Mammary epithelial cell (primary cell): ENCODE measurements at regions of chr1 and their contacts with region 1.

Region 1: DNA sequence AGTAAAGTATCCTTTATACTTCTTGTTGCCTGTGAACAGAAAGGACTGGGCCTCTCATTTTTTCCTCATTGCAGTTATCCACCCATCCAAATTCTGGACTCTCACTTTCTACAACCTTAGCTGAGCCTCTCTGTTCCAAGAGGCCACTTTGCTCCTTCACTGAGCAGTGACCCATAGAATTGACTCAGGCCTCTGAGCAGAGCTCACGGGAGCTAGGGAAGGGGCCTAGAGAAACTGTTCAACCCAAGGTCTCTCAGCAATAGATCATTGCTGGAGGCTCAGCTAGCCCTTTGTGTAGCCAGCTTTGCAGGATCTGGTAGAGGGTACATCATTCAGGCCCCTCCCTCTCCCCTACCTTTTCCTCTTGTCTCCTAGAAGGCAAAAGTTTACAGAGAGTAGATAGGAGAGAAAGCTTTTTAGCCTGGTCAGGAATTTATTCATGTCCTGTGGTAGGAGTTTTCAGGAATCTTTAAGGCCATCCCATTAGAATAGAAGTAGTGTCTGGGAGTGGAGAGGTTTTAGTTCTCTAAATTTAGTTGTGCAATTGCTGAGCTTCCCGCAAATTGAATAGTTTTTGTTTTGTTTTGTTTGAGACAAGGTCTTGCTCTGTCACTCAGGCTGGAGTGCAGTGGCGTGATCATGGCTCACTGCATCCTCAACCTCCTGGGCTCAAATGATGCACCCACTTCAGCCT is 6.7 kb downstream of the INTS3 start:
- DNase-seq: no peak
- H3K4me3 ChIP-seq: no peak overlapping the region
- H3K27ac ChIP-seq: no peak overlapping the region
- H3K4me1 ChIP-seq: peaks cover 5% of the 10 kb centered on the region
- H3K27me3 ChIP-seq: no peaks in the 10 kb centered on the region
- CTCF ChIP-seq: no peak

Region 2: GRCh38 chr1:153639280-153639679 is 95.3 kb before region 1 on chr1:
- CTCF ChIA-PET with region 1: no interaction called
- dilution Hi-C with region 1: loop called (anchors 5 kb)
- in situ Hi-C with region 1: no loop called
- intact Hi-C with region 1: no loop called
- DNase-seq: no peak
- H3K4me3 ChIP-seq: no peak overlapping the region
- H3K27ac ChIP-seq: no peak overlapping the region
- H3K4me1 ChIP-seq: peaks cover 3% of the 10 kb centered on the region
- H3K27me3 ChIP-seq: no peaks in the 10 kb centered on the region
- CTCF ChIP-seq: no peak

Region 3: DNA sequence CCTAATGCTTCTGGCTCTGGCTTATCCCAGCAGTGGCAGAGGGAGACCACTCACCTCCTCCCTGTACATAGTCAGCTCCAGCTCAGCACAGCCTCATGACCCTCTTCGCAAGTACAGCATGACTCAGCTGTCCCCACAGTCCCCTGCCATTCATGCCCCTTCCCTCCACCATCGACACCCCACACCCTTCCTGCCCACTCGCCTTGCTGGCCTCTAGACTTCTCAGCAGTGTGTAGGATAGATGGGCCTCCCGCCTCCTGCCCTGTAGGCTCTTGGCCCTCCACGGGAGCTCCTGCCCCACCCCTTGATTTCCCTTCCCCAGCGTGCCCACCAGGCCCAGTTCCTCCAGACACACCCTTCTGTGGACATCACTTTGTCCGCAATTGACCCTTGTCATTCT is 46.3 kb before region 1 on chr1:
- CTCF ChIA-PET with region 1: no interaction called
- dilution Hi-C with region 1: loop called (anchors 5 kb)
- in situ Hi-C with region 1: no loop called
- intact Hi-C with region 1: no loop called
- DNase-seq: no peak
- H3K4me3 ChIP-seq: no peak overlapping the region
- H3K27ac ChIP-seq: no peak overlapping the region
- H3K4me1 ChIP-seq: no peaks in the 10 kb centered on the region
- H3K27me3 ChIP-seq: no peaks in the 10 kb centered on the region
- CTCF ChIP-seq: no peak

Region 4: GRCh38 chr1:153775458-153776327 is 41.1 kb after region 1 on chr1:
- CTCF ChIA-PET with region 1: no interaction called
- dilution Hi-C with region 1: loop called (anchors 5 kb)
- in situ Hi-C with region 1: no loop called
- intact Hi-C with region 1: no loop called
- DNase-seq: peak; percentile 74
- H3K4me3 ChIP-seq: peak overlapping the region; percentile 61 to 67 (median 65)
- H3K27ac ChIP-seq: no peak overlapping the region
- H3K4me1 ChIP-seq: peaks cover 27% of the 10 kb centered on the region
- H3K27me3 ChIP-seq: no peaks in the 10 kb centered on the region
- CTCF ChIP-seq: peak in 1 of 2 donors; percentile 20

Region 5: GRCh38 chr1:154419620-154420571 is 685.4 kb after region 1 on chr1:
- CTCF ChIA-PET with region 1: no interaction called
- dilution Hi-C with region 1: no loop called
- in situ Hi-C with region 1: no loop called
- intact Hi-C with region 1: no loop called
- DNase-seq: peak; percentile 81
- H3K4me3 ChIP-seq: no peak overlapping the region
- H3K27ac ChIP-seq: peak overlapping the region; percentile 79
- H3K4me1 ChIP-seq: peaks cover 60% of the 10 kb centered on the region
- H3K27me3 ChIP-seq: no peaks in the 10 kb centered on the region
- CTCF ChIP-seq: no peak